CD14-positive monocyte (primary cell): ENCODE measurements at regions of chr11 and their contacts with region 1.

Region 1: DNA sequence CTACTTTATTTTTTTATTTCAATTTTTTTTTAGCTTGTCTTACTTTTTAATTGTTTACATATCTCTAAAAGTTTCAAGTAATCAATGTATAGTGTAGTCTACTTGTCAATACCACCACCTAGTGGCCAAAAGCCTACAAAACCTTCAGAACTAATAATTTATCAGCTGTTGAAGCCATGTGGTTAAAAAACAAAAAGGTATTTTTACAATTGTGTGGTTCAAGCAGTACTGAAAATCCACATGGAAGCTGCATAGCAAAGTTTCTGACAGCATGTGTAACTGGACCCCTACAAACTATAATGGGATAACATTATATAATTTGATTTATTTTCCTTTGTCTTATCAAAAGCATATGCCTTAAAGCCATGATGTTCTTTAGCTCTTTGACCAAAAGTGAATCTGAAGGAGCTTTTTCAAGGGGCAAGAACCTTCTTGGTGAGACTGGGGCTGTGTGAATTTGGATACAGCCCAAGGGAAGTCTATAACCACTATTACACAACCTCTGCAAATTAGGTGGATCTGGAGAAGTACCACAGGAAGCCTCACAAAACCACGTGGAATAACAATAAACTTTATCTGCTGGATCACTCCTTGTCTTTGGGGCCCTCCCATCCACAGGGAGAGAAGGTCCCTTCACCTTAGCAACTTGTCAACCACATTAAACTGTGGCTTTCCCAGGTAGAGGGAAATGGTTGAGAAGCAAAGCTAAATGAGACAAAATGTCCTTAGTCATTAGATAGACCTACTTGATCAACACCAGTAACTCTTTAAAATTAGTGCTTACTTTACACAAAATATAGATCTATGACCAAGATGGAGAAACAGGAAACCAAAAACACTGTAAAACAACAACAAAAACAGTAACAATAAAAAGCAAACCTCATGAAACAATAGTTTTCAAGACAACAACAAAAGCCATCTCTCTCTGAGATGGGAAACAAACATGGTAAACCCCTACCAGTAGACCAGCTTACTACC is 9.9 kb downstream of the NARS2 start:
- DNase-seq: peak; percentile 39 to 71 (median 52)
- H3K4me3 ChIP-seq: no peak overlapping the region
- H3K4me3 Mint-ChIP-seq: no peak overlapping the region
- H3K27ac ChIP-seq: peak overlapping the region in 1 of 2 donors; percentile 25
- H3K27ac Mint-ChIP-seq: peak overlapping the region in 4 of 7 donors; percentile 46 to 78 (median 61)
- H3K4me1 ChIP-seq: peaks cover 34 to 38% of the 10 kb centered on the region in 2 donors
- H3K4me1 Mint-ChIP-seq: peaks cover 39% of the 10 kb centered on the region
- H3K27me3 ChIP-seq: no peaks in the 10 kb centered on the region
- H3K27me3 Mint-ChIP-seq: no peaks in the 10 kb centered on the region
- CTCF ChIP-seq: peak; percentile 87

Region 2: GRCh38 chr11:78228467-78228866 is 336.3 kb before region 1 on chr11:
- intact Hi-C with region 1: loop called (anchors 2 to 5 kb)
- DNase-seq: peak; percentile 48 to 60 (median 56)
- H3K4me3 ChIP-seq: no peak overlapping the region
- H3K4me3 Mint-ChIP-seq: no peak overlapping the region
- H3K27ac ChIP-seq: peak overlapping the region in 1 of 2 donors; percentile 23
- H3K27ac Mint-ChIP-seq: peak overlapping the region in 2 of 7 donors; percentile 55 to 71
- H3K4me1 ChIP-seq: peaks cover 8 to 9% of the 10 kb centered on the region in 2 donors
- H3K4me1 Mint-ChIP-seq: peaks cover 37% of the 10 kb centered on the region
- H3K27me3 ChIP-seq: no peaks in the 10 kb centered on the region
- H3K27me3 Mint-ChIP-seq: no peaks in the 10 kb centered on the region
- CTCF ChIP-seq: peak; percentile 68

Region 3: DNA sequence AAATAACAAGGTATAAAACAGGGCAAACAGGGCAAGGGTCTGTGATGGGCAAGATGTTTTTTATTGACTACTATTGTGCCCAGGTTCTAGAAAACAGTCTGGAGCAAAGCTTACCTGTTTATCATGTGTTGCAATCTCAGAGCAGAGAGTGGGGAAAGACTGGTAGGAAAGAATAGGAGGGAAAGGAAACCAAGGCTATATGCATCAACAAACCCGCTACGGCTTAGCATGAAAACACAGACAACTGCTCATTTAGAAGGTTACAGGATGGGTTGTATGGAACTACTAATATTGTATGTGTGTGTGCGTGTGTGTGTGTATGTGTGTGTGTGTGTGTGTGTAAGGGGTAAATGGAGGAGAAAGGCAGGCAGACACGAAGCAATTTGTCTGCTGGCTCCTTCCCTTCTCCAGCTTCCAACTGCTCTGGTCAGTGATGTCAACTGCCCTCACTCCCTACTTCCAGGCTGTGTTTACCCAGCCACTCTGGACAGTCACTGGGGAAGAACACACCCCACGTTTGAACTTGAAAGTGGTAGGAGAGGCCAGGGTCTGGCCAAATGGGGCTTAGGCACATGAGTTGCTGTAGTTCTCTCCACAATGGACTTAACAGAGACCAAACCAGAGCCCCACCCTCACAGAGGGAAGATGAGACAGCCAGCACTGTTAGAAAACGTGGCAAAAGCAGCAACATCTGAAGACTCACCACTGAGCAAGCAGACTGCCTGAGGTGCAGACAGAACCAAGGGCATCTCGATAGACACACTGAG is 194.2 kb before region 1 on chr11:
- intact Hi-C with region 1: loop called in 1 of 2 experiments (anchors 10 kb)
- DNase-seq: no peak
- H3K4me3 ChIP-seq: no peak overlapping the region
- H3K4me3 Mint-ChIP-seq: no peak overlapping the region
- H3K27ac ChIP-seq: peak overlapping the region in 1 of 2 donors; percentile 37
- H3K27ac Mint-ChIP-seq: peak overlapping the region in 5 of 7 donors; percentile 10 to 71 (median 51)
- H3K4me1 ChIP-seq: peaks cover 15 to 35% of the 10 kb centered on the region in 2 donors
- H3K4me1 Mint-ChIP-seq: peaks cover 37% of the 10 kb centered on the region
- H3K27me3 ChIP-seq: no peaks in the 10 kb centered on the region
- H3K27me3 Mint-ChIP-seq: no peaks in the 10 kb centered on the region
- CTCF ChIP-seq: no peak

Region 4: GRCh38 chr11:78416305-78417178 is 148.2 kb before region 1 on chr11:
- intact Hi-C with region 1: loop called in 1 of 2 experiments (anchors 5 kb)
- DNase-seq: peak; percentile 91 to 95 (median 95)
- H3K4me3 ChIP-seq: peak overlapping the region; percentile 47 to 94 (median 84)
- H3K4me3 Mint-ChIP-seq: peak overlapping the region; percentile 95 to 96
- H3K27ac ChIP-seq: peak overlapping the region; percentile 98 to 100
- H3K27ac Mint-ChIP-seq: peak overlapping the region; percentile 98 to 100 (median 99)
- H3K4me1 ChIP-seq: peaks cover 70 to 80% of the 10 kb centered on the region in 2 donors
- H3K4me1 Mint-ChIP-seq: peaks cover 74% of the 10 kb centered on the region
- H3K27me3 ChIP-seq: no peaks in the 10 kb centered on the region
- H3K27me3 Mint-ChIP-seq: peaks cover 0 to 8% (median 0%) of the 10 kb centered on the region in 3 donors
- CTCF ChIP-seq: peak; percentile 59

Region 5: DNA sequence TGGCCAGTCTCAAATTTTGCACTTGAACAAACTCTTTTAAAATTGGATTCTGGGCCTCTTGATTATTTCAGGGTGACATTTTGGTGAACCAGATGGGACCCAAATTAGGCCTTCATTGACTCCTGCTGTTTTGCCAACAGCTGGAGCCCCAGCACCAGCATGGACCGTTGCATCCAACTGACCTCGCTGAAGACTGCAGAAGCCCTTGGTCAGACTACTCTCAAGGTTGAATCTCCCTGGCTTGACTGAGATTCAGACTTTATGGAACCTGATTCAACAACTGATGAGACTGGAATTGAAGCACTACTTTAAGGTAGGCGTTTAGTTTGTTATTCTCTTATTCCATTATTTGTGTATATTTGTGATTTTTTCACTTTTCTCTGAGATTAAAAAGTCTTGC is 31.8 kb before region 1 on chr11:
- intact Hi-C with region 1: no loop called
- DNase-seq: peak in 1 of 3 donors; percentile 2
- H3K4me3 ChIP-seq: no peak overlapping the region
- H3K4me3 Mint-ChIP-seq: peak overlapping the region in 1 of 2 donors; percentile 7
- H3K27ac ChIP-seq: peak overlapping the region in 1 of 2 donors; percentile 52
- H3K27ac Mint-ChIP-seq: peak overlapping the region in 5 of 7 donors; percentile 48 to 85 (median 62)
- H3K4me1 ChIP-seq: peaks cover 4 to 10% of the 10 kb centered on the region in 2 donors
- H3K4me1 Mint-ChIP-seq: peaks cover 14% of the 10 kb centered on the region
- H3K27me3 ChIP-seq: no peaks in the 10 kb centered on the region
- H3K27me3 Mint-ChIP-seq: no peaks in the 10 kb centered on the region
- CTCF ChIP-seq: no peak